ENCODE measurements at regions of chr7 and their contacts with region 1.

Region 1: DNA sequence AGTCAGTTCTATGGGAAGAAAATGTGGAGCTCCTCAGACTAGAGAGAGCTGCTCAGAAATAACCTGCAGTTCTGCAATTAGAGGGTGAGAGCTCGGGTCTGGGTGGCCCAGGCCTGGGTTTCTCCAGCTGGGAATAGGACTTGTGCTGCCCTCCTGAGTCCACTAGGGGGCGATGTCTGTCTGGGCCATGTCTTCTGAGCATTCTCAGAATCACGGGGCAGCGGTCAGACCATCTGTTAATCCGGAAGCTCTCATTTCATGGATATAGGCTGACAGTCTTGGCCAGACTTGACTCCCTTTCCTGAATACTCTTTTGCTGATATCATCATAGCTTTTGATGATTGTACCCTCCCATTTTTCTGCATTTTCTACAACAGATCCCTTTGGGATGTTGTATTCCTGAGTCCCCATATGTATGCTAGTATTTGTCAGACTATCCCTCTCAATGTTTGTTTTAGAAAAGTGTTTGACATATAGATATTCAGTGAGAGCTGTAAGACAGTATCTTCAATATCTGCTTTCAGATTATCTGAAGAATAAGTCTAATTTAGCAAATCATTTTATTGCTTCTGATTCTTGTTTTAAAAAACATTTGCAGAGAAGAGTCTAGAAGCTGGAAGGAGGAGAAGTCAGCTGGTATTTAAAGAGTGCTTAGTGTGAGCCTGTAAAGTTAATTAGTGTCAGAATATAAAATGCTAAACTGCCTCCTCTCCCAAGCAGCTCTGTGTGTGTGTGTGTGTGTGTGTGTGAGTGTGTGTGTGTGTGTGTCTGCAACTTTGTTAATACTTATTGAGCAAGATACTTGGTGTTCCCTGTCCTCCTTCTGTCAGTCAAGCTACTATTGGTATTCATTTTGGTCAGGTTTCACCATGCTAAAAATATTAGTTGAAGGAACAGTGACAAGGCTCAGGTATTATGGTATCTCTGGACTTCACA is 38.0 kb downstream of the STARD3NL start:
- DNase-seq: peak; percentile 43
- H3K4me3 ChIP-seq: no peak overlapping the region
- H3K27me3 ChIP-seq: no peaks in the 10 kb centered on the region
- CTCF ChIP-seq: peak; percentile 98

Region 2: DNA sequence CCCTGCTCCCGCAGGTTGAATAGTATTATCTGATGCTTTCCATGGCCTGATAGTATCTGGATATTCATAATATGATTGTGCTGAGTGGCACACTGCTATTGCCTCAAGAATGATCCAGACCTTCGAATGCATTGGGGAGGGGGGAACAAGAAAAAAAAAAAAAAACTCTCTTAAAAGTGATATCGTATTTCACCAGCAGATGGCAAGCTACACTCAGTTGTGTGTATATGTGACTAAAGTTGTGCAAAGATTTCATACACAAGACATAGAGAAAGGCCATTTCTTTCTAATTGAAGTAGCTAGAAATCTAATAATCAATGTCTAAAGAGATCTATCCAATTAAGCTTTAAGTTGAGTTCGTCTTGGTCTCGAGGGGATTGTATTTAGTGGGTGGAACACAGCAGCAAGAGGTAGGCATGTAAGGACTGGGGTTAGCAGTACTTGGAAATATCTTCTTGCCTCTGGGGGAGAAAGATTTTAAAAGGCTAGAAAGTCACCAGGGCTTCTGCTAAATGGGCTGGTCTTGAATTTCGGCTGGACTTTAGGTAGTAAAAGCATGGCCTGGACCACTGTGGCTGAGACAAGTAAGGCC is 314.7 kb before region 1 on chr7:
- CTCF ChIA-PET with region 1: interaction called, 13 read pairs
- POLR2A ChIA-PET with region 1: interaction called, 6 read pairs
- DNase-seq: no peak
- H3K4me3 ChIP-seq: no peak overlapping the region
- H3K27me3 ChIP-seq: no peaks in the 10 kb centered on the region
- CTCF ChIP-seq: peak; percentile 45

Region 3: DNA sequence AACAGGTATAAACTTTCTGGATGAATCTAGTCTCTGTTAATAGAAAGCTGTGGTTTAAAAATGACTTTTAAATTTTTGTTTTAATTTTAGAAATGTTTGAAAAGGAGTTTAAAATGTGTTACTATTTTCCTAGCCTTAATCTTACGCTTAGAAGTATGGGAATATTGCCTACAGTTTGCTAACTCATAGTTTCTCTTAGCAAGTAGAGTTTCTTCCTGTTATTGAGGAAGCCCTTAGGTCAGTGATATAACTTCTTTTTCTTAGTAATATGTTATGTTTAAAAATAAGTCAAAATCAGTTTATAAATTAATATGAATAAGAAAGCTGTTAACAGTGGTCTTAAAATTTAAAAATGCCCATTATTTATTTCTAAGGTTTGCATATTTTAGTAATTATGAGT is 34.9 kb before region 1 on chr7:
- CTCF ChIA-PET with region 1: interaction called, 24 read pairs
- POLR2A ChIA-PET with region 1: interaction called, 3 read pairs
- DNase-seq: no peak
- H3K4me3 ChIP-seq: no peak overlapping the region
- H3K27me3 ChIP-seq: no peaks in the 10 kb centered on the region
- CTCF ChIP-seq: no peak

Region 4: GRCh38 chr7:38195804-38196595 is 20.0 kb before region 1 on chr7:
- CTCF ChIA-PET with region 1: interaction called, 33 read pairs
- POLR2A ChIA-PET with region 1: interaction called, 10 read pairs
- DNase-seq: no peak
- H3K4me3 ChIP-seq: no peak overlapping the region
- H3K27me3 ChIP-seq: no peaks in the 10 kb centered on the region
- CTCF ChIP-seq: no peak

Region 5: DNA sequence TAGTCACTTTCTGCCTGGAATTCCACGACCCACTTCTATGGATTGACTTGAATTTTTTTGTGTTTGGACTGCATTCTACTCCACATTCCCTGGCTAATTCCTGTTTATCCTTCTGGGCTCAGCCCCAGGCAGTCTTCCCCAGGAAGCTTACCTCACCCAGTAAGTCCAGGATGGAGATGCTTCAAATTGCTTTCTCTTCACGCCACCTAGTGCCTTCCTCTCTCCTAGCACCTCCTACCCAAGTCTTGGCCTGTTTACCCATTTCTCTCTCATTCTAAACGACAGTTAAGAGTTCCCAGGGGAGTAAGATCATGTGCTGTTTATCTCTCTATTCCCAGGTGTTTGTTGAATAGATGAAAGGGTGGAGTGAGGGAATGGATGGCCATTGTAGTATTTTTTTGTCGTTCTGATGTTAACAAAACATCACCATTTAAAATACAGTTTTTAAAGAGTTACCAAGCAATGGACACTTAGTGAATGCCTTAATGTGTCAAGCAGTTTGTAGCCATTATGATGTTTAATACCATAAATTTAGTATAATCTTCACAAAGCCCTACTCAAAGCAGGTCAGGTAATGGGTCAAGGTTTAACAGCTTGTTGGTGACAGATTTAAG is 102.9 kb after region 1 on chr7:
- CTCF ChIA-PET with region 1: interaction called, 59 read pairs
- POLR2A ChIA-PET with region 1: no interaction called
- DNase-seq: peak; percentile 56
- H3K4me3 ChIP-seq: no peak overlapping the region
- H3K27me3 ChIP-seq: no peaks in the 10 kb centered on the region
- CTCF ChIP-seq: peak; percentile 76

Region 6: DNA sequence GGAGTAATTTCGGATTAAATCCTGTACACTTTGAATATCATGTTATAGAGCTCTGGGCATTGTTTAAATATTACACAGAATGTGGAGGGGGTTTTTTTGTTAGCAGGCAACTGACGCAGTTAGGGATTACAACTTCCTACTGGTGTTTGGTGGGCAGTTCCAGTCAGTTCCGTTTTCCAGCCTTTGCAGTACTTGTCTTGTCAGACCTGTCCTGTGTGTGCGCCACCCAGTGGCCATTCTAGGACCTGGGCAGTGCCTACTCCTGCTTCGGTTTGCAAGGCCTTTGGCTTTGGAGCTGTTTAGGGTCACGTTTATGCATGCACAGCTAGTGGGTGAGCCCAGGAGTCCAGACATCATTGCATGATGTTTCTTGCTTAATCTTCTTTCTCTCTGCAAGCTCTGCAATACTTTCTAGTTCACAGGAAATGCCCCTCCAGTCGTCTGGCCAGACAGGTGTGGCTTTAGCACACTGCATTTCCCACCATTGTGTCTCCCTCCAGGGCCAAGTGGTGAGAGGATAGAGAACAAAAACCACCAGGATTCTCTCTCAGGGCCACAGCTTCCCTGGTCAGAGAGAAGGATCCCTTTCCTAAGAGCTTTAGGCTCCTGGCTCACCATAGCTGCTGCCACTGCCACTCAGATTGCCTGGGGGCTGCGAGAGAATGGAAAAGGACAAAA is 154.0 kb after region 1 on chr7:
- CTCF ChIA-PET with region 1: interaction called, 17 read pairs
- POLR2A ChIA-PET with region 1: no interaction called
- DNase-seq: no peak
- H3K4me3 ChIP-seq: no peak overlapping the region
- H3K27me3 ChIP-seq: no peaks in the 10 kb centered on the region; the same call in 1 of the 2 replicates
- CTCF ChIP-seq: peak; percentile 94

Region 7: DNA sequence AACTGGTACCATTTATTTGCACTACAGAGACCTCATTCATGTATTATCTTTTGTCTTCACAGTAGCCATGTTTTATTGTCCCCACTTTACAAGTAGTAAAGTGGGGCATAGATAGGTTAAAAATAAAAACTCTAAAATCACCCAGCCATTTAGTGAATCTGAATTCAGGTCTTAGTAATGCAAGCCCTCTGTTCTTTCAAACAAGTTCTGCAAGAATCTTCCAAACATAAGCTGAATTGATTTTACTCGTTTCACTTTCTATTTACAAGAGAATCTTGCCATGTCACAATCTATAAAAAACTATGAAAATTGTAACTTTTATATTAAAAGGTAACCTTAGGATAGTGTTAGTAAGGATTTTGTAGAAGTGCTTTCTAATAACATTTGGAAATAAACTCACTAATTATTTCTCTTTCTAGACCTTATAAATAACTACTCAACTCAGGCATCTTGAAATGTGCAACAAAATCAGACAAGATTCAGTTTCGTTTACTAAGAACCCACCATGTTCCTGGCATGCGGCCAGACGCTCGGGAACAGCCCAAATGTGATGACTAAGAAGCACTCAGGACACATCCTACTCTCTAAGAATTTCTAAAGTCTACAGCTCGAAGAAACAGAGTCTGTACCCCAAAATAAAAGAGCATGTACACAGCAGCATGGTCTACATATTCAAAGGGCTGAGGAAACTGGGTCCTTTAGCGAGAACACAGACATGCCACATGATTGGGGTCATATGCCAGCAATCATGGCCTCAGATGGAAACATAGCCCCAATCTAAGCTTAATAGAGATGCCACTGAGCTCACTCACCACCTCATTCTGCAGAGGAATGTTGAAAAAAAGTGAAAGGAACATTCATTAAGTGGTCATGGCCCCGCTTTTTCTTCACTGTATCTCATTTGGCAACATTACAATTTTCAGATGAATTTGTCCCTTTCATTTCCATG is 247.5 kb after region 1 on chr7:
- CTCF ChIA-PET with region 1: no interaction called
- POLR2A ChIA-PET with region 1: no interaction called
- DNase-seq: no peak
- H3K4me3 ChIP-seq: no peak overlapping the region
- H3K27me3 ChIP-seq: no peaks in the 10 kb centered on the region
- CTCF ChIP-seq: no peak

Region 8: DNA sequence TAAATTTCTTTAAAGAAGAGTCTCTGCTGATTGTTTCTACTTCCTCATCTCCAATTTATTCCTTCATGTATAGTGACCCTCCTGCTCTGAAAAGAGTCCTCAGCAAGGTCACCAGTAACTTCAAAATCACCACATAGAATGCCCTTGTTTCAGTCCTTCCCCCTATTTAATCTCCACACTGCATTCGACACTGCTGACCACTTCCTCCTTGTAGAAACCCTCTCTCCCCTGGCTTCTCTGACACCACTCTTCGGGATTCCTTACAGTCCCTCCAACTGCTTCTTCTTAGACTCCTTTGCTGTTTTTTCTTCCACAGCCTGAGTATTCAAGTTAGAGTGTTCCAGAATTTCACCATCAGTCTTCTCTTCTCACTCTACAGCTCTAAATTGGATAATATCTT is 603.5 kb after region 1 on chr7:
- CTCF ChIA-PET with region 1: no interaction called
- POLR2A ChIA-PET with region 1: no interaction called
- DNase-seq: no peak
- H3K4me3 ChIP-seq: no peak overlapping the region
- H3K27me3 ChIP-seq: no peaks in the 10 kb centered on the region
- CTCF ChIP-seq: no peak